ENCODE measurements at regions of chr3 and their contacts with region 1.

Region 1: DNA sequence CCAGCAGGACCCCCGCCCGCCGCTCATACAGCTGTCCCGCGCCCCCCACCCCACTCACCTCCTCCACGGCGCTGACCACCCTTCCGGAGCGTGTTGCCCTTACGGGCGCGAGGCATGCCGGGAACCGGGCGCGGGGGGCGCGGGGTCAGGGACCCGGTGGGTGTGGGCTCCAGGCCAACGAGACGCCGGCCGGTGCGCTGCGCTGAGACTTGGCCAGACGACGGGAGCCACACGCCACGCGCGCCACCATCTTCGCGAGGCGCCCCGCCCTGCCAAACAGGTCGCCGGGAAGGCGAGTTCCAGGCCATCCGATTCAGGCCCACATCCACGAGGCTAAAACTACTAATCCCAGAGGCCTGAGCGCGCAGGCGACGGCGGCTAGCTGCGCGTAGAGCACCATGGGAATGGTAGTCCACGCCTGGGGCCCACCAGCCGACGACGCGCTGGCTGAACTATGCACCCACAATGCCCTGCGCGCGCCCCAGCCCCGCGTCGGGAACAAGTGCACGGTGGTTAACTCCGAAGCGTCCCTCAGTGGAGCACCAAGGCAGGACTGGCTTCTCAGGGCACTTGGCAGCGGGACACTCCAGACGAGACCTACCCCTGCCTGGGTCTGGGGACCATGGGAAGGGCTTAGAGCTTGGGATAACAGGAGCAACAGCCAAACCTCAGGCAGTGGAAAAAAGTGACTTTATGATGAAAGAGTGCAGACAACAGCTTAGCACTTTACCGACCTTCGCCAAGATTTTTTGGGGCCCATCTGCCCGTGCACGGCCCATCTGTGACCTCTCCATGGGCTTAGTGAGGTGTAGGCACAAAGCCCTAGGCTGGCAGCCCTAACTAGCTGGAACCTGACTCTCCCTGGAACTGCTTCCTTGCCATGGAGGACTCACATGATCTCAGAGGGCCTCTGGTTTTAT is at the start of gene IFRD2:
- DNase-seq: peak; percentile 97
- H3K4me3 ChIP-seq: peak within 1 kb of the TSS; percentile 59 to 70 (median 65)
- H3K27ac ChIP-seq: peak within 1 kb of the TSS; percentile 63
- H3K4me1 ChIP-seq: peaks cover 6% of the 10 kb centered on the region
- H3K27me3 ChIP-seq: no peaks in the 10 kb centered on the region
- CTCF ChIP-seq: peak in 1 of 2 donors; percentile 7
- total RNA-seq, gene IFRD2: 65.5 to 117 TPM

Region 2: DNA sequence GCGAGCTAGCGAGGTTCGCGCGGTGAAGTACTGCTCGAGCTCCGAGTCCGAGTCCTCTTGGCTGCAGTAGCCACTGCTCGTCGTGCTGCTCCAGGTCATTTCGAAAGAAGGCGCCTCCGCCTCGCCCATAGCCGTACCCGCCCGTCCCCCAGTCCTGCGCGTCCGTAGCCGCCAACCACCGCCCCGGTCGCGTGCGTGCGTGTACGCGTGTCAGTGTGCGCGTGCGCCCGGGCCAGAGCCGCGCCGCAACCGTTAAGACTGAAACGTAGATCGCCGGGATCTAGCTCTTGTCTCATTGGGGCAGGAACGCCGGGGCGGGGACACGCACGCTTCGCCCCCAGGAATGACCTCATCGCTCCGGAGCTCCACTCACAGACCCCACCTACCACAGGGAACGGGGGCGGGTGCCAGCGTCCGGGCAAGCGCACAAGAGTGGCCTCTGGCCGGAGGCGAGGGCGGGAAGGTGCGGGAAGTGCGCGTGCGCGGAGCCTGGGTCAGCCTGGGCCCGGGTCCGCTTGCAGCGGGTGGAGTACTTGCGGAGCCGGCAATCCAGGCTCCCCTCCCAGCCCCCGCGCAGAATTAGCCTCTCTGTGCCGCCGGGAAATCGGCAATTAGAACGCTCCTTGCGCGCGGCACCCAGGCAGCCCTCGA is 44.9 kb after region 1 on chr3:
- CTCF ChIA-PET with region 1: no interaction called
- dilution Hi-C with region 1: no loop called
- in situ Hi-C with region 1: no loop called
- intact Hi-C with region 1: loop called (anchors 2 kb)
- DNase-seq: peak; percentile 99
- H3K4me3 ChIP-seq: peak overlapping the region; percentile 71 to 87 (median 74)
- H3K27ac ChIP-seq: peak overlapping the region; percentile 88
- H3K4me1 ChIP-seq: peaks cover 36% of the 10 kb centered on the region
- H3K27me3 ChIP-seq: no peaks in the 10 kb centered on the region
- CTCF ChIP-seq: no peak